Right cardiac atrium (tissue), 5 donors: ENCODE measurements at regions of chr18 and their contacts with region 1.

Region 1: DNA sequence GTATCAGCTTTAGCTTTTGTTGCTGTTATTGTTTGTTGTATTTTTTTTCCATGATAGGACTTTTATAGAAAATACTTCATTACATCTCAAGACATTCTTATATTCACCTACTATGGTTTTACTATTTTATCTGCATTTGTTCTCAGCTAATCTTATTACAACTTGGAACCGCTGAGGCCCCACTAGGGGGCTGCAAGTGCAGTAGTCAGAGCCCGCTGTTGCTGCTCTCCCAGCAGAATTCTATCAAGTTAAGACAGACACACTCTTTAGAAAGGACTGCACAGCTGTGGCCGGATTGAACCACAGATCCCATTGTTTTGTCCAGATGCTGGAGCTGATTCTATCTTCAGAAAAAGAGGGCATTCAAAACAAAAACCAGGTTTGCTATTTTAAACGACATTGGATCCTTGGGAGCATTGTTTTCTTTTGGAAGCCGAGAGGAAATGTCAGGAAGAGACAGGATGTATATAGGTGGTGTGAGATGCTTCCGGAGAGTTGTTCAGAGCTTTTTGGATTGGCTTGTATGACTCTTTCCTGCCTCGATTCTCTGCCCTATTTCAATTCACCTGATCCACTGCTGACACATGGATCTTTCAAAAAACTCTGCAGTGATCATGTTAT is 105.7 kb upstream of the GAREM1 start:
- DNase-seq: peak in 2 of 3 donors; percentile 16 to 62
- ATAC-seq: peak in 1 of 2 donors; percentile 70
- H3K4me3 ChIP-seq: peak overlapping the region; percentile 18
- H3K27ac ChIP-seq: no peak overlapping the region
- H3K4me1 ChIP-seq: no peaks in the 10 kb centered on the region
- H3K27me3 ChIP-seq: no peaks in the 10 kb centered on the region

Region 2: GRCh38 chr18:32511147-32511546 is 65.3 kb before region 1 on chr18:
- intact Hi-C with region 1: loop called in 1 of 4 experiments (anchors 10 kb)
- DNase-seq: no peak
- ATAC-seq: no peak
- H3K4me3 ChIP-seq: no peak overlapping the region
- H3K27ac ChIP-seq: no peak overlapping the region
- H3K4me1 ChIP-seq: no peaks in the 10 kb centered on the region
- H3K27me3 ChIP-seq: no peaks in the 10 kb centered on the region

Region 3: GRCh38 chr18:32701313-32701712 is 124.9 kb after region 1 on chr18:
- intact Hi-C with region 1: no loop called
- DNase-seq: no peak
- ATAC-seq: no peak
- H3K4me3 ChIP-seq: no peak overlapping the region
- H3K27ac ChIP-seq: no peak overlapping the region
- H3K4me1 ChIP-seq: no peaks in the 10 kb centered on the region
- H3K27me3 ChIP-seq: no peaks in the 10 kb centered on the region